Activated naive CD4-positive, alpha-beta T cell treated with anti-CD3 and anti-CD28 coated beads for 36 hours (primary cell): ENCODE measurements at regions of chr3 and their contacts with region 1.

Region 1: GRCh38 chr3:48400824-48401433 is 28.9 kb downstream of the FBXW12 start:
- DNase-seq: peak; percentile 77
- H3K4me3 Mint-ChIP-seq: no peak overlapping the region
- H3K27ac Mint-ChIP-seq: no peak overlapping the region
- H3K4me1 Mint-ChIP-seq: no peaks in the 10 kb centered on the region
- H3K27me3 Mint-ChIP-seq: peaks cover under 1% of the 10 kb centered on the region

Region 2: DNA sequence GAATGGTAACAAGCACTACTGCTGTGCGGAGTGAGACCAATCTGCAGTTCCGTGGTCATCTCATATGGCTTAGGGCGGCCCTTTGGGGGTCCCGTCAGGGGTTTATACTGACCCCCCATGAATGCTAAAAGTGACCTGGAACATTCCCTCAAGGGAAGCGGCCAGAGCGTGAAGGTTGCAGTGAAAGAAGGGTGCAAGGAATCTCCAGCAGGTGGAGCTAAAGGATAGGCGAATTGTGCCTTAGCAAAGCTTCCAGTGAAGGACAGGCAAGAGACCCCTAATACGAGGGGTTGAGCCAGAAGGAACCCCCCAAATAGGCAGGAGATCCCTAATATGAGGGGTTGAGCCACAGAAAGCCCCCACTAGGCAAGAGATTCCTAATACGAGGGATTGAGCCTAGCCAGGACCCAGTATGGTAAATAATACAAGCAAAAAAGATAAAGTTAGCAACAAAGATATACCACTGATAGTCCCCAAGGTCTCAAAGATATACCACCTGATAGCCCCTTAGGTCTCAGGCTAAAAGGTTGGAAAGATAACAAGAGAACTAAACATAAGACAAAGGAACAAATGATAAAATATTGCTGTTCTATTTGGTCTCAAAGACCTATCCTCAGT is 127.2 kb before region 1 on chr3:
- CTCF ChIA-PET with region 1: interaction called, 16 read pairs
- intact Hi-C with region 1: loop called (anchors 2 kb)
- DNase-seq: peak; percentile 71
- H3K4me3 Mint-ChIP-seq: no peak overlapping the region
- H3K27ac Mint-ChIP-seq: no peak overlapping the region
- H3K4me1 Mint-ChIP-seq: peaks cover 14% of the 10 kb centered on the region
- H3K27me3 Mint-ChIP-seq: no peaks in the 10 kb centered on the region

Region 3: DNA sequence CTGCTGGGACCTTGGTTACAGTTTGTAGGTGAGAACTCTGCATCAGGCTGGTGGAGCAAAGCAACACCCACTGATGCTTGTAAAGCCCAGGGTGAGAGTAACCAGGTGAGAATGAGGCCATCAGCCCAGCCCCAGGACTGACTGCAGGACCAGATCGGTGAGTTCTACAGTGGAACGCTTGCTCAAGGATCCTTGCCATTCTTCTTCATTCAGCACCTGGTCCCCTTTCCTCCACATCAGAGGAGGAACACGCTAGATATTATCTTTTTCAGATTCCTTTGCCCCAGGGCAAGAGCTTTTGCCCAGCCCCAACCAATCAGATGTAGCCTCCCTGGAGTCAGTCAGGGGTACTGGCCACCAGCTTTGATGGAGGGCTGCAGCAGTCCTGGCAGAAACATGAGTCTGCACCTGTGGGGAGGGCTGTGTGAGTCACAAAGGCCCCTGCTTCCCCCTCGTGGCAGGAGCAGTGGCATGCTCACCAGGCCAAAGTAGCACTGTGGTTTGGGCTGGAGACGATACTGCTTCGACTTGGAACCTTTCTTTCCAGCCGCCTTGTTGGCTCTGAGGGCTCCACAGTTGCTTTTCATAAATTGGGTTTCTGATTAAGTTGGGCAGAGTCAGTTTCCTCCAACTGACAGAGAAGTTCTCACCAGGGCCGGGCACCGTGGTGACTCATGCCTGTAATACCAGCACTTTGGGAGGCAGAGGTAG is 106.6 kb after region 1 on chr3:
- CTCF ChIA-PET with region 1: interaction called, 11 read pairs
- intact Hi-C with region 1: loop called (anchors 1 kb)
- DNase-seq: peak; percentile 82
- H3K4me3 Mint-ChIP-seq: peak overlapping the region; percentile 32
- H3K27ac Mint-ChIP-seq: peak overlapping the region; percentile 66
- H3K4me1 Mint-ChIP-seq: peaks cover 47% of the 10 kb centered on the region
- H3K27me3 Mint-ChIP-seq: no peaks in the 10 kb centered on the region

Region 4: GRCh38 chr3:48609088-48610005 is 208.4 kb after region 1 on chr3 and contains the start of gene UQCRC1:
- CTCF ChIA-PET with region 1: interaction called, 11 read pairs
- intact Hi-C with region 1: loop called (anchors 1 kb)
- DNase-seq: peak; percentile 94
- H3K4me3 Mint-ChIP-seq: peak within 1 kb of the TSS; percentile 99
- H3K27ac Mint-ChIP-seq: peak within 1 kb of the TSS; percentile 92
- H3K4me1 Mint-ChIP-seq: peaks cover 23% of the 10 kb centered on the region
- H3K27me3 Mint-ChIP-seq: no peaks in the 10 kb centered on the region
- total RNA-seq, gene UQCRC1: 211 to 232 TPM

Region 5: DNA sequence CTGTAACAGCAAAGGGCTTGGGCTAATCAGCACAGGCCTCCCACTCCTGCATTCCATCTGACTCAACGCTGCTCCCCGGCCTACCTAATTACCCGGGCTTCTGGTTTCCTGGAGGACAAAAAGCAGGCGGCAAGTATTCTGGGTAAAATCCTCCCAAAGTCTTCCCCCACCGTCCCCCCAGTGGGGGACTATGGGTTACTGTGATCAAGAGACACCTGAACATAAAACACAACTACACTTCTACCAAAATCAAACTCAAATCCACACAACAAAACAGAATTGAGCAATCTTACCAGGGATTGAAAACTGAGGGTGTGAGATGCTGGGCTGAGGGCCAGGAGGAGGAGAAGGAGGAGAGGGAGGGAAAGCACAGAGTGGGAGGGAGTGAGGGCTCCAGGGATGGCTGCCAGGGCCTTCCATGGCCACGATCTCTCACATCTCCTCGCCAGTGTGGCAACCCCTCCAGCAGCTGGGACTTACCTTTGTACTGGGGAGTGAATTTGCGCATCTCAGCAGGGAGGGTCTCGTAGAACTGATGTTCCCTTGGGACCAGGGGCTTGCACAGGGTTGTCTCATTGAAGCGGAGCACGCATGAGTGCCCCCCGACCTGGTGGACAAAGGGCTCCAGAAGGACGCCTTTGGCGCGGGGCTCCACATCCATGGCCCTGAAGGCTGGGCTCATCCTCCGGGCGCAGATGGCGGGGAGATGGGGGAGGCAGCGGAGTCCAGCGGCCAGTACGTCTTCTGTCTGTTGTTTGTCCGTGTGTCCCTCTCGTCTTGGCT is 293.9 kb after region 1 on chr3:
- CTCF ChIA-PET with region 1: no interaction called
- intact Hi-C with region 1: no loop called
- DNase-seq: no peak
- H3K4me3 Mint-ChIP-seq: no peak overlapping the region
- H3K27ac Mint-ChIP-seq: no peak overlapping the region
- H3K4me1 Mint-ChIP-seq: peaks cover 17% of the 10 kb centered on the region
- H3K27me3 Mint-ChIP-seq: no peaks in the 10 kb centered on the region